A673 (cell line): ENCODE measurements at regions of chr15 and their contacts with region 1.

Region 1: DNA sequence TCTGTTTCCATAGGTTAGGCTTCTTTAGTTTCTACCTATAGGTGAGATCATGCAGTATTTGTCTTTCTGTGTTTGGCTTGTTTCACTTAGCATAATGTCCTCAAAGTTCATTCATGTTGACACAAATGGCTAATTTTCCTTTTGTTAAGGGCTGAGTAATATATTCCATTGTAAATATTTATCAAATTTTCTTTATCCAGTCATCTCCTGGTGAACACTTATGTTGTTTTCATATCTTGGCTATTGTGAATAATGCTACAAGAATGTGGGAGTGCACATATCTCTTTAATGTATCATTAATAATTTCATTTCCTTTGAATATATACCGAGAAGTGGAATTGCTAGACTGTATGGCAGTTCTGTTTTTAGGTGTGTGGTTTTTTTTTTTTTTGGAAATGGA is 251.0 kb upstream of the SEMA6D start:
- DNase-seq: no peak
- H3K4me3 ChIP-seq: no peak overlapping the region
- H3K27ac ChIP-seq: no peak overlapping the region
- H3K4me1 ChIP-seq: peaks cover 18% of the 10 kb centered on the region
- H3K27me3 ChIP-seq: no peaks in the 10 kb centered on the region
- CTCF ChIP-seq: no peak

Region 2: DNA sequence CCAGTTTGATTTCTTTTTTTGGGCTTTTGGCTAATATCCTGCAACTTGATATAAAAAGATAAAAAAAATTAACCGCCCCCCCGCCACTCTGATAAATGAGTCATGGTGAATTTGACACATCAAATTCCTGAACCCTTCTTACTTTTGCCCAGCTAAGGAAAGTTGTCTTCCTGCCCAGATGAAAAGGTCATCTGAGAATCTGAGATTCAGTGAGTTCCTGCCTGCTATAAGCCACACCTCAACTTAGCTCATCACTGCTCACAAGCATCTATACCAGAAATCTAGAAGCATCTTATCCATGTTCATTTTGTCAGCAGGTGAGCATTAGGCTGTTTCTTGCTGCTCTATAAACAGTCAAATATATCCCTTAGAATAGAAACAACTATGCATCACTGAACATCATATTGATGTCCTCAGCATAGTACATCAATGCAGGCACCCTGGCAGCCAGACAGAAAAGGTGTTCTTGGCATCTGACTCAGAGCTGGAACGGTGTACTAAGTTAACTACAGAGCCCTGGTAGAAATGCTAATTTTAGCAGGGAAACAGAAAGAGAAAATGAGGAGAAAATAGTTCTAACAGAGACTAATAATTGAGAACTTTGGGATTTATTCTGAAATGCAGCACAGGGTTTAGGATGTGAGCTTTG is 328.0 kb after region 1 on chr15:
- CTCF ChIA-PET with region 1: no interaction called
- POLR2A ChIA-PET with region 1: interaction called, 11 read pairs
- intact Hi-C with region 1: no loop called
- DNase-seq: no peak
- H3K4me3 ChIP-seq: no peak overlapping the region
- H3K27ac ChIP-seq: no peak overlapping the region
- H3K4me1 ChIP-seq: no peaks in the 10 kb centered on the region
- H3K27me3 ChIP-seq: no peaks in the 10 kb centered on the region
- CTCF ChIP-seq: no peak